ENCODE measurements at regions of chr3 and their contacts with region 1.

Region 1: GRCh38 chr3:135918580-135918962 is 47.0 kb upstream of the PPP2R3A start:
- DNase-seq: no peak
- H3K4me3 ChIP-seq: no peak overlapping the region
- CTCF ChIP-seq: peak; percentile 42

Region 2: DNA sequence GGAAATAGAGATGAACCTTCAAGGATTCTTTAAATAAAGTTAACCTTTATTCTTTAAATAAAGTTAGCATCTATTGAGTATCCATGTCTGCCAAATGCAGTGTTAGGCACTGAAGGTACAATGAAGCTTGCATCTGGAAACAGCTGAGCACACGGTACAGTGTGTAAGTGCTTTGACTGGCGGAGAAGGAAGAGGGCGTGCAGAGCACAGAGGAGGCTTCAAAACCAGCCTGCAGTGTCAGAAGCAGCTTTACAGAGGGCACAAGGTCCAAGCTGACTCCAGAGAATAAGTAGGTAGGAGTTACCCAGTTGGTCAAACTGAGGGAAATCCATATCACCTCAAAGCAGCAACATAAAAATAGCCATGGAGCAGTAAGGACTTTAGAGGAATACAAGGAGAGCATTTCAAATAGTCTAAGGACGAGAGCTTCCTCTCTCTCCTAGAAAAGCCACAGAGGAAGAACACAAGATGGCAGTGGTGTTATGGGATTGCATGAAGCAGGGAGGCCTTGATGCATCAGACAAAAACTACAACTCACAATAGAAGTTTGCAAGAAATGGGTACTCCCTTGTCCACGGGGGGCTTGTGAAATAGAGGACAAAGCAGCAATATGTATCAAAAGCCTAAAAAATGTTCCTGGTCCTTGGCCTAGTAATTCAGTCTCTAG is 13.4 kb before region 1 on chr3:
- CTCF ChIA-PET with region 1: interaction called, 81 read pairs
- POLR2A ChIA-PET with region 1: no interaction called
- DNase-seq: no peak
- H3K4me3 ChIP-seq: no peak overlapping the region
- CTCF ChIP-seq: peak; percentile 18

Region 3: DNA sequence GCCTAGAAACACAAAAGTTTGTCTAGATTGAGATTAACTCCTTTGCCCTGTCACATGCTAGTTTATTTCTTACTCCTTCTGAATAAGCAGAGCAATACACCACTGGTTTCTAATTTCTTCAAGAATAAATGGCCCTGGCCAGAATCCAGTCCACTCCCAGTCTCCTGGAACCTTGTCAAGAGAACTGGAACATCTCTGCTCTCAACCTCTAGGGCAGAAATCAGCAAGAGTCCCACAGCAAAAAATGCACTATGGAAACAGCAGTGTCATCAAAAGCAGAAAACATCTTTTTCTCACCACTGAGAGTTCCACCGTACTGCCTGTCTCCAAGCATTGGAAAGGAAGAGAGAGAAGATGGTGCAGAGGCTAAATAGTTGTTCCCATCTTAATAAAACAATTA is 11.1 kb after region 1 on chr3:
- CTCF ChIA-PET with region 1: interaction called, 31 read pairs
- POLR2A ChIA-PET with region 1: no interaction called
- DNase-seq: no peak
- H3K4me3 ChIP-seq: no peak overlapping the region
- CTCF ChIP-seq: no peak

Region 4: DNA sequence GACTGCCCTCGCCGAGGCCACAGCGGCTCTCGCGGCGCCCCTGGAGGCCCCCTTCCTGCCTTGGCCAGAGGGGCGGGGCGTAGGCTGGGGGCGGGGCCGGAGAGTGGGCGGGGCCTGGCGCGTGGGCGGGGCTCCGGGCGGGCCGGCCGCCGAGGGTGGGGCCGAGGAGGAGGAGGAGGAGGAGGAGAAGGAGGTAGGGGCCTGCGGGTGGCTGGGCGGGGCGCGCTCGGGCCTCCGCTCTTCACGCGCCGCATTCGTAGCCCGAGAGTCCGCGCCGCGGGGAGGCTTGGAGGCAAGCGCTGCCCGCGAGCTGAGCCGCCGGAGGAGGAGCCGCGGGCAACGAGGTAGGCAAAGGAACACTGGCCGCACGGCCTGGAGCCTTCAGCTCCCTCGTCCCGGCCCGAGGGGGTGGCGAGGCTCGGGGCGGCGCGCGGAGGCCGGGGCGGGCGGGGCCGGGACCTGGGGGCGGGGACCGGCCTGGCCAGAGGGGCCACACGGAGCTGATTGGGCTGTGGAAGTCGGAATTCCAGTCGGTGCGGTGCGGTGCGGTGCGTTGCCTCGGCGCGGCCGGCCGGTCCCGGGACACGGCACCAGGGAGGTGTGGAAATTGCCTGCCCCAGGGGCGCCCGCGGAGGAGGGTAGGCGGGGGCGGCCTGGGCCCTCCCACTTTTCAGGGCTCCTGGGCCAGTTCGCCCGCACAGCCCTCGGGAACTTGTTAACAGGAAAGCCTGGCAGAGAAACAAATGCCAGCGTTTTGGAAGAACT is 47.1 kb after region 1 on chr3 and contains the start of gene PPP2R3A:
- CTCF ChIA-PET with region 1: interaction called, 10 read pairs
- POLR2A ChIA-PET with region 1: no interaction called
- DNase-seq: peak; percentile 17
- H3K4me3 ChIP-seq: peak within 1 kb of the TSS; percentile 74
- CTCF ChIP-seq: peak; percentile 20

Region 5: GRCh38 chr3:136050250-136050649 is 131.7 kb after region 1 on chr3:
- CTCF ChIA-PET with region 1: interaction called, 531 read pairs
- POLR2A ChIA-PET with region 1: no interaction called
- DNase-seq: no peak
- H3K4me3 ChIP-seq: no peak overlapping the region
- CTCF ChIP-seq: no peak

Region 6: GRCh38 chr3:136584728-136585127 is 666.2 kb after region 1 on chr3:
- CTCF ChIA-PET with region 1: no interaction called
- POLR2A ChIA-PET with region 1: no interaction called
- DNase-seq: no peak
- H3K4me3 ChIP-seq: no peak overlapping the region
- CTCF ChIP-seq: no peak

Measured in AG04449 (cell line).